ENCODE measurements at regions of chr10 and their contacts with region 1.

Region 1: GRCh38 chr10:70461215-70461986 is 17.2 kb upstream of the PALD1 start:
- DNase-seq: no peak
- H3K4me3 ChIP-seq: no peak overlapping the region
- H3K27me3 ChIP-seq: peaks cover 6% of the 10 kb centered on the region; the same call in 1 of the 2 replicates
- CTCF ChIP-seq: peak; percentile 88

Region 2: GRCh38 chr10:70241081-70241480 is 220.3 kb before region 1 on chr10:
- CTCF ChIA-PET with region 1: no interaction called
- POLR2A ChIA-PET with region 1: no interaction called
- DNase-seq: no peak
- H3K4me3 ChIP-seq: no peak overlapping the region
- H3K27me3 ChIP-seq: peaks cover 19% of the 10 kb centered on the region
- CTCF ChIP-seq: no peak

Region 3: GRCh38 chr10:70445718-70446657 is 15.4 kb before region 1 on chr10:
- CTCF ChIA-PET with region 1: interaction called, 35 read pairs
- POLR2A ChIA-PET with region 1: no interaction called
- DNase-seq: no peak
- H3K4me3 ChIP-seq: no peak overlapping the region
- H3K27me3 ChIP-seq: peaks cover 29% of the 10 kb centered on the region
- CTCF ChIP-seq: no peak

Region 4: GRCh38 chr10:70478191-70479164 is 17.1 kb after region 1 on chr10 and contains the start of gene PALD1:
- CTCF ChIA-PET with region 1: interaction called, 18 read pairs
- POLR2A ChIA-PET with region 1: no interaction called
- DNase-seq: no peak
- H3K4me3 ChIP-seq: peak within 1 kb of the TSS; percentile 40
- H3K27me3 ChIP-seq: peaks cover 49% of the 10 kb centered on the region
- CTCF ChIP-seq: peak; percentile 21; the same call in 1 of the 2 replicates
- polyA plus RNA-seq, gene PALD1: 0.01 and 0.10 TPM in 2 replicates

Region 5: GRCh38 chr10:70528726-70529362 is 67.4 kb after region 1 on chr10:
- CTCF ChIA-PET with region 1: interaction called, 10 read pairs
- POLR2A ChIA-PET with region 1: no interaction called
- DNase-seq: no peak
- H3K4me3 ChIP-seq: no peak overlapping the region
- H3K27me3 ChIP-seq: peaks cover 2% of the 10 kb centered on the region
- CTCF ChIP-seq: no peak

Region 6: DNA sequence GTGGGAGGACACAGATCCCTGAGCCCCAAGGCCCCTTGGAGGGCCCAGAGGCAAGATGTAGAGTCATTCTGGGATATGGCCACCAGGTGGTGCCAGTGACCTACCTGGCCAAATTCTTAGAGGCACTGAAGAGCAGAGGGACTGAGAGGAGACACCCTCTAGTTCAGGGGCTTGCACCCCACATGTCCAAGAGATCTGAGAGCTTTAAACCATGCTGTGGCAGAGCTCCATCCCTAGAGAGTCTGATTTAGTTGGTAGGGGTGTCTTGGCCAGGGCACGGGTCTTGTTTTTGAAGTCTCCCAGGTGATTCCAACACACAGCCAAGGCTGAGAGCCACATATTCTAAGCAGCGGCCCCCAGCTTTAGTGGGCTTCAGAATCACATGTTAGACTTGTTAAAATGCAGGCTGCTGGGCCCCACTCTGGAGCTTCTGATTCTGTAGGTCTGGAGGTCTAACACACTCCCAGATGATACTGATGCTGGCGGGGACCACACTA is 88.6 kb after region 1 on chr10:
- CTCF ChIA-PET with region 1: interaction called, 123 read pairs
- POLR2A ChIA-PET with region 1: no interaction called
- DNase-seq: no peak
- H3K4me3 ChIP-seq: no peak overlapping the region
- H3K27me3 ChIP-seq: no peaks in the 10 kb centered on the region
- CTCF ChIP-seq: peak; percentile 86